Head of caudate nucleus (tissue), 42 donors: ENCODE measurements at regions of chr5 and their contacts with region 1.

Region 1: GRCh38 chr5:55172051-55172899 is 702 bp downstream of the CDC20B start:
- DNase-seq: peak in 38 of 42 donors; percentile 7 to 83 (median 58)

Region 2: GRCh38 chr5:55232985-55233928 is 61.0 kb after region 1 on chr5 and contains the start of gene CCNO:
- intact Hi-C with region 1: loop called (anchors 5 kb)
- DNase-seq: peak in 40 of 42 donors; percentile 31 to 92 (median 76)

Region 3: GRCh38 chr5:55307383-55308253 is 135.3 kb after region 1 on chr5 and contains the starts of genes DHX29 and MTREX:
- intact Hi-C with region 1: no loop called
- DNase-seq: peak; percentile 88 to 97 (median 94)

Region 4: GRCh38 chr5:55691265-55692105 is 519.2 kb after region 1 on chr5:
- intact Hi-C with region 1: loop called (anchors 10 kb)
- DNase-seq: no peak